Sigmoid colon (tissue), 7 donors: ENCODE measurements at regions of chr7 and their contacts with region 1.

Region 1: GRCh38 chr7:47720141-47720906 is 138.4 kb upstream of the TNS3 start:
- DNase-seq: peak; percentile 96
- H3K4me3 ChIP-seq: no peak overlapping the region
- H3K27ac ChIP-seq: peak overlapping the region in 3 of 4 donors; percentile 57 to 69 (median 67)
- H3K4me1 ChIP-seq: peaks cover 0 to 22% (median 18%) of the 10 kb centered on the region in 4 donors
- H3K27me3 ChIP-seq: no peaks in the 10 kb centered on the region
- CTCF ChIP-seq: no peak
- EP300 ChIP-seq: peak in 2 of 4 donors; percentile 63 to 84
- POLR2A ChIP-seq: no peak

Region 2: DNA sequence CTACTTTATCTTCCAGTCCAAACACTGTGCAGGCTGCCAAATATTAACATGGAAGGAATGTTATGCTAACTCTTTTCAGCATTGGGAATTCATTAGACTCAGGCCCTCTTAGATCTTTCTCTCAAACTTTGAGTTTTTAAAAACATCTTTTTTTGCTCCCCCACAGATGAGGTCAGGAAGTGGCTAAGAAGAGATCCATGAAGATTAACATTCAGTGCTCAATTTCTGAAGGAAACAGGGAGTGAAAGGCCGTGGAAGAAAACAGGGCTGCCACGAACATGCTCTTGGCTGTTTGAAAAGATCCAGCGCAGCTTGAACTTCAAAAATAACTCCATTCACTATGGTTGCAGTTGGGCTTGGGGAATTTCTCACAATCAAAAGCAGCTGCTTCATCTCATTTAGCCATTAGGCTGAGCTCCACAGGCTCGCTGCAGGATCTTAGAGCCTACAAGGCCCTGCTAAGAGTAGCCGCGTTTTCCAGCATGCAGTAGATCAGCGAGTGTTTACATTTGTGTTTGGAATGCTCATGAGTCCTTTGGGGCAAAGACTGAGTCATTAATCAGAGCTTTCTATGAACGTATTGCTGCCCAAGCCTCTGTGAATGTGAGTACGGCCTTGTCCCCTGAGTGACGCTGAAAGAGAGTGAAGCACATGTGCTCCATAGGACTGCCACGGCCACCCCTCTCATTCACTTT is 97.2 kb before region 1 on chr7:
- intact Hi-C with region 1: loop called (anchors 5 kb)
- DNase-seq: peak; percentile 85
- H3K4me3 ChIP-seq: no peak overlapping the region
- H3K27ac ChIP-seq: peak overlapping the region; percentile 71 to 82 (median 76)
- H3K4me1 ChIP-seq: peaks cover 0 to 42% (median 37%) of the 10 kb centered on the region in 4 donors
- H3K27me3 ChIP-seq: no peaks in the 10 kb centered on the region
- CTCF ChIP-seq: no peak
- EP300 ChIP-seq: peak in 1 of 4 donors; percentile 43
- POLR2A ChIP-seq: no peak

Region 3: GRCh38 chr7:47635091-47636080 is 84.9 kb before region 1 on chr7:
- intact Hi-C with region 1: loop called (anchors 5 kb)
- DNase-seq: peak; percentile 80
- H3K4me3 ChIP-seq: no peak overlapping the region
- H3K27ac ChIP-seq: peak overlapping the region; percentile 75 to 88 (median 83)
- H3K4me1 ChIP-seq: peaks cover 0 to 66% (median 58%) of the 10 kb centered on the region in 4 donors
- H3K27me3 ChIP-seq: no peaks in the 10 kb centered on the region
- CTCF ChIP-seq: no peak
- EP300 ChIP-seq: no peak
- POLR2A ChIP-seq: no peak

Region 4: DNA sequence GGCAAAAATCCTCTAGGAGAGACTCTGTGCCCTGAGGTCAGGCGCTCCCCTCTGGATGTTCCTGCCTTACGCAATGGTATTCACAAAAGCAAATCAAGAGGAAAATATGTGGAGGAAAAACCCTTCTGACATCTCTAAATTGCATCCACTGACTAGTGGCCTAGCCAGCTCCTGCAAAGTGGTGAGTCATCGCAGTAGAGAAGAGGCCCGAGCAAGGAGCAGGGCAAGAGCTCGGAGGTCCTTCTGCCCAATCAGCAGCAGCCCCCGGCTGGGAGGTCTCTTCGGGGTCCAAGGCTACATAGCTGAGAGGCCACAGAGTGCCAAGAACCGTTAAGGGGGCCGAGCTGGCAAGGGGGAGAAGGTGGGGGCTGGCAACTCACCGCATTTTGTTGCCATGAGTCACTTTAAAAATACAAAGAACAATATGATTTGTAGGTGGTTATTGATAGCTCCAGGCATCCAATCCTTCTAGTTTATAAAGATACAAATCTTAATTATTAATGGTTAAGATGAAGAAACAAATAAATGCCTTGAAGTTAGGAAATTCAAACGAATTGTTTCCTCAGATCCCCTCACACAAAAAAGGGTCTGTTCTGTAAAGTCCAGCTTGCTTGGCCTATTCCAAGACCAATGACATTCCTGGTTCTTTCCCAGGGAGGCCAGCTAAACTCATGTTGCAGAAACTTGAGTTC is 66.4 kb after region 1 on chr7:
- intact Hi-C with region 1: loop called (anchors 2 kb)
- DNase-seq: peak; percentile 88
- H3K4me3 ChIP-seq: no peak overlapping the region
- H3K27ac ChIP-seq: peak overlapping the region; percentile 79 to 88 (median 82)
- H3K4me1 ChIP-seq: peaks cover 0 to 59% (median 55%) of the 10 kb centered on the region in 4 donors
- H3K27me3 ChIP-seq: no peaks in the 10 kb centered on the region
- CTCF ChIP-seq: no peak
- EP300 ChIP-seq: peak in 1 of 4 donors; percentile 3
- POLR2A ChIP-seq: no peak

Region 5: DNA sequence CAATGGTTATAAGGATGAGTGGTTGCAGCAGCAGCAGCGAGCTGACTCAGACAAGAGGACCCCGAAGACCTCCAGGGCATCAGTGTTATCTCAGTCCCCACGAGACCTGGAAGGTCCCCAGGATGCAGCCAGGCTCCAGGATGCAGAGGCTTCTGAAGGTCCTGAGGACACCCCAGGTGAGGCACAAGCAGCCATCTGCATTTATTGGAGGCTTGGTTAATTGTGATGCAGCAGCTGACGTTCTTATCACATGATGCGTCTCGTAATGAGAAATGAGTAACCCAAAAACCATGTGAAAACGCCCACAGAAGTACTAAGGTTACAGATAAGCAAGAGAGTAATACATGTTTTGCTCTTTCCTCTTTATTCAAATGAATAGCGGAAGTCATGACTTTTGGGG is 332.4 kb after region 1 on chr7:
- intact Hi-C with region 1: no loop called
- DNase-seq: no peak
- H3K4me3 ChIP-seq: no peak overlapping the region
- H3K27ac ChIP-seq: no peak overlapping the region
- H3K4me1 ChIP-seq: no peaks in the 10 kb centered on the region
- H3K27me3 ChIP-seq: no peaks in the 10 kb centered on the region
- CTCF ChIP-seq: no peak
- EP300 ChIP-seq: no peak
- POLR2A ChIP-seq: no peak